ENCODE measurements at regions of chr7 and their contacts with region 1.

Region 1: GRCh38 chr7:137992550-137993394 is 9.1 kb downstream of the CREB3L2 start:
- DNase-seq: peak; percentile 97
- H3K4me3 ChIP-seq: peak overlapping the region in 2 of 4 donors; percentile 14 to 18
- H3K27ac ChIP-seq: peak overlapping the region; percentile 68 to 99 (median 86)
- H3K4me1 ChIP-seq: peaks cover 0 to 98% (median 97%) of the 10 kb centered on the region in 4 donors
- H3K27me3 ChIP-seq: no peaks in the 10 kb centered on the region
- CTCF ChIP-seq: no peak
- EP300 ChIP-seq: peak; percentile 48 to 81 (median 68)
- POLR2A ChIP-seq: no peak

Region 2: GRCh38 chr7:137898839-137899721 is 93.7 kb before region 1 on chr7:
- intact Hi-C with region 1: no loop called
- DNase-seq: peak; percentile 88
- H3K4me3 ChIP-seq: no peak overlapping the region
- H3K27ac ChIP-seq: peak overlapping the region in 1 of 4 donors; percentile 37
- H3K4me1 ChIP-seq: peaks cover 0 to 32% (median 25%) of the 10 kb centered on the region in 4 donors
- H3K27me3 ChIP-seq: no peaks in the 10 kb centered on the region
- CTCF ChIP-seq: peak; percentile 76 to 93 (median 90)
- EP300 ChIP-seq: no peak
- POLR2A ChIP-seq: no peak

Region 3: GRCh38 chr7:137953665-137954470 is 38.9 kb before region 1 on chr7:
- intact Hi-C with region 1: loop called (anchors 2 kb)
- DNase-seq: no peak
- H3K4me3 ChIP-seq: no peak overlapping the region
- H3K27ac ChIP-seq: peak overlapping the region; percentile 75 to 91 (median 84)
- H3K4me1 ChIP-seq: peaks cover 0 to 91% (median 75%) of the 10 kb centered on the region in 4 donors
- H3K27me3 ChIP-seq: no peaks in the 10 kb centered on the region
- CTCF ChIP-seq: no peak
- EP300 ChIP-seq: peak in 1 of 4 donors; percentile 65
- POLR2A ChIP-seq: no peak

Region 4: GRCh38 chr7:138115047-138115446 is 122.3 kb after region 1 on chr7:
- intact Hi-C with region 1: no loop called
- DNase-seq: no peak
- H3K4me3 ChIP-seq: no peak overlapping the region
- H3K27ac ChIP-seq: no peak overlapping the region
- H3K4me1 ChIP-seq: no peaks in the 10 kb centered on the region
- H3K27me3 ChIP-seq: no peaks in the 10 kb centered on the region
- CTCF ChIP-seq: no peak
- EP300 ChIP-seq: no peak
- POLR2A ChIP-seq: no peak